H1 (cell line): ENCODE measurements at regions of chr6 and their contacts with region 1.

Region 1: DNA sequence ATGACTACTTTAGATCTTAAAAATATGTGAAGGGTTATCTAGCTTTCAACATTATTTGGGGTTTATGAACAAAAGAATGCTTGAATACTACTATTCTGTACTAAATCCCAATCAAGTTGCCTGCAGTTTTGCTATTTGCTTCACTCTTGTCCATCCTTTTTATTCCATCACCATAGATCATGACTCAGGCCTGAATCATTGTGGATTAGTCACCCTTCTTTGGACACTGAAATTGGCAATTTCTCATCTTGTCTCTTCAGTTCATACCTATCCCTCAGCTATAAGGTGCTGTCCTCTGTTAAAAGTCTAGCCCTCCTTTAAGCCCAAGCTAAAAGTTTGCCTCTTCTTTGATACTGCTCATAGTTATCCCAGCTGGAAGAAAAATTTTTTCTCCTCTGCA is 199.1 kb downstream of the CENPW start:
- DNase-seq: no peak
- H3K4me3 ChIP-seq: no peak overlapping the region
- H3K27ac ChIP-seq: no peak overlapping the region
- H3K4me1 ChIP-seq: no peaks in the 10 kb centered on the region
- H3K27me3 ChIP-seq: peaks cover 0 to 1% (median 0%) of the 10 kb centered on the region in 4 experiments; a peak in 1 of 7 replicates
- CTCF ChIP-seq: no peak
- EP300 ChIP-seq: no peak
- POLR2A ChIP-seq: no peak
- RAD21 ChIP-seq: no peak

Region 2: GRCh38 chr6:126477678-126478077 is 61.3 kb before region 1 on chr6:
- CTCF ChIA-PET with region 1: no interaction called
- POLR2A ChIA-PET with region 1: no interaction called
- DNase-seq: no peak
- H3K4me3 ChIP-seq: no peak overlapping the region
- H3K27ac ChIP-seq: no peak overlapping the region
- H3K4me1 ChIP-seq: no peaks in the 10 kb centered on the region
- H3K27me3 ChIP-seq: no peaks in the 10 kb centered on the region
- CTCF ChIP-seq: no peak
- EP300 ChIP-seq: no peak
- POLR2A ChIP-seq: no peak
- RAD21 ChIP-seq: no peak

Region 3: GRCh38 chr6:126550323-126550722 is 11.3 kb after region 1 on chr6:
- CTCF ChIA-PET with region 1: interaction called, 11 read pairs
- POLR2A ChIA-PET with region 1: no interaction called
- DNase-seq: peak; percentile 1 to 49
- H3K4me3 ChIP-seq: no peak overlapping the region
- H3K27ac ChIP-seq: no peak overlapping the region
- H3K4me1 ChIP-seq: no peaks in the 10 kb centered on the region
- H3K27me3 ChIP-seq: no peaks in the 10 kb centered on the region
- CTCF ChIP-seq: peak; percentile 33 to 63 (median 58)
- EP300 ChIP-seq: no peak
- POLR2A ChIP-seq: no peak
- RAD21 ChIP-seq: peak; percentile 45 to 57

Region 4: DNA sequence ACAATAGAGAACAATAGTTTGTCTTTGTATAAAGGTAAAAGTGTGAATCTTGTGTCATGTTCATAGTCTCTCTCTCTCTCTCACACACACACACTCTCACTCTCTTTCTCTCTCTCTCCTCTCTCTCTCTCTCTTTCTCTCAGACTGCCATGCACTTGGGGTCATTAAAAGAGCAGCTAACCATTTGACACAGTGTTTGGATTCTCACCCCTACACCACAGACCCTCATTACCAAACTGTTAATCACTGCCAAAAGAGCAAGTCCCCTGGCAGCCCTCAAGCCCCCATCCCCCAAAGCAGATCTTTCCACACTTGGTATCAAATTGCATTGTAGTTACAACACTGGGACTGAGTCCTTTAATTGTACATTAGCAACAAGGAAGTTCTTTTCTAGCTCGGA is 273.6 kb after region 1 on chr6:
- CTCF ChIA-PET with region 1: no interaction called
- POLR2A ChIA-PET with region 1: no interaction called
- DNase-seq: no peak
- H3K4me3 ChIP-seq: no peak overlapping the region
- H3K27ac ChIP-seq: no peak overlapping the region
- H3K4me1 ChIP-seq: no peaks in the 10 kb centered on the region; a peak in 3 of 7 replicates
- H3K27me3 ChIP-seq: no peaks in the 10 kb centered on the region
- CTCF ChIP-seq: no peak
- EP300 ChIP-seq: no peak
- POLR2A ChIP-seq: no peak
- RAD21 ChIP-seq: no peak